Tibial artery (tissue), 4 donors: ENCODE measurements at regions of chr15 and their contacts with region 1.

Region 1: DNA sequence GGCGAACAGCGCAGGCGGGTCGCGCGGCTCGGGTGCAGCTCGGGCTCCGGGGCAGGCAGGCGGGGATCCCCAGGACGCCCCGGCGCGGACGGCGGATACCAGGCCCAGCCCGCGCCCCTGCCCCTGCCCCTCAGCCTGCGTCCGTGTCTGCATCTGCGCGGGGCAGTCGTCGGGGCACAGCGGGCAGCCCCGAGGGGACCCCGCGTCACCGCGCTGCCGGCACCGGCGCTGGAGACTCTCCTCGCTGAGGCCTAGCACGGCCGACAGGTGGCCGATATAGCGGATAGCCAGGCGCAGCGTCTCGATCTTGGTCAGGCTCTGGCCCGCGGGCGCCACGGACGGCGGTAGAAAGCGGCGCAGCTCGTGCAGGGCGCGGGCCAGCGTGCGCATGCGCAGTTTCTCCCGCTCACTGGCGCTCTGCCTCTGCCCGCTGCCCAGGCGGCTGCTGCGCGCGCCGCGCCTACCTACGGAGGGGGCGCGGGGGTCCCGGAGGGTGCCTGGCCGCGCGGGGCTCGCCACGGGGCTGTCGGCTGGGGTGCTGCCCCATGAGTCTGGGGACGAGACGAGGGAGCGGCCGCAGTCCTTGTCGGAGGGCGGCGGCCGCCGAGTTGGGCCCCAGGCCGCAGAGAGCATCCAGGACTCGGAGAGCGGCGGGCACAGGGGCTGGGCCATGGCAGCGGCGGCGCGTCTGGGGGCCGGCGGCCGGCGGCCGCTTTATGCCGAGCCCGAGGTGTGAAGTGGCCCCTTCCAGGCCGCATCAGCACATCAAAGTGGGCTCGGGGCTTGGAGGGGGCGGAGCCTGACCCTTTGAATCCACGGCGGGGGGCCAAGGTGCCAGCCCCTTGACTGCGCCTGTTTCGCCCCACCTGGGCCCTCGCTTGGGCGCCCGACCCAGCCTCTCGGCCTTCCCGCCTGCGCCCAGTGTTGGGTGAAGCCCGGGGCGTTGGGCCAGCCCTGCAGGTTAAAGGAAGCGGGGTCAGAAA is at the start of gene MESP1:
- DNase-seq: peak; percentile 85 to 93
- H3K4me3 ChIP-seq: peak within 1 kb of the TSS; percentile 66 to 87
- H3K27ac ChIP-seq: peak within 1 kb of the TSS; percentile 64 to 69
- H3K4me1 ChIP-seq: peaks cover 0 to 23% (median 14%) of the 10 kb centered on the region in 4 donors
- H3K27me3 ChIP-seq: peaks cover 0 to 30% of the 10 kb centered on the region in 2 donors
- CTCF ChIP-seq: peak; percentile 88 to 93

Region 2: GRCh38 chr15:89647191-89647851 is 103.5 kb before region 1 on chr15:
- intact Hi-C with region 1: loop called (anchors 5 kb)
- DNase-seq: peak; percentile 86
- H3K4me3 ChIP-seq: no peak overlapping the region
- H3K27ac ChIP-seq: no peak overlapping the region
- H3K4me1 ChIP-seq: peaks cover 0 to 6% (median 0%) of the 10 kb centered on the region in 4 donors
- H3K27me3 ChIP-seq: no peaks in the 10 kb centered on the region
- CTCF ChIP-seq: peak; percentile 88 to 93

Region 3: DNA sequence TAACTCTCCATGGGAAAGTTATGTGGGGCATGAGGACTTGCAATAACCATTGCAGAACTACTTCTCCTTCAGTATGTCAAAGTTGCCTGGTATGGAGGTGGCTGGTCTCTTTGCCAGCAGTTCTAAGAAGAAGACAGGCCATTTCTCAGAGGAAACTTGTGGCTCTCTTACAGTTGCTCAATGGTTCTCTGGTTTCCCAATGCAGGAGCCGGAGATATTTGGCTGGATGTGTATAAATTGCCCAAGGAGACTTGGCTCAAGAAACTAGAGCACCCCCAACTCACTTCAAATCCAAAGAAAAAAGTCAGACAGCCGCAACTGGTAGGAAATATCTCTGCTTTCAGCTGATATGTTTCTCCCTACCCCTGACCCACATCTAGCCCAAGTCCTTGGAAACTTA is 36.1 kb before region 1 on chr15:
- intact Hi-C with region 1: no loop called
- DNase-seq: no peak
- H3K4me3 ChIP-seq: no peak overlapping the region
- H3K27ac ChIP-seq: no peak overlapping the region
- H3K4me1 ChIP-seq: no peaks in the 10 kb centered on the region
- H3K27me3 ChIP-seq: no peaks in the 10 kb centered on the region
- CTCF ChIP-seq: no peak

Region 4: GRCh38 chr15:89812011-89812835 is 61.4 kb after region 1 on chr15:
- intact Hi-C with region 1: no loop called
- DNase-seq: peak; percentile 80 to 87
- H3K4me3 ChIP-seq: no peak overlapping the region
- H3K27ac ChIP-seq: peak overlapping the region; percentile 38 to 55
- H3K4me1 ChIP-seq: peaks cover 0 to 30% (median 22%) of the 10 kb centered on the region in 4 donors
- H3K27me3 ChIP-seq: peaks cover 0 to 42% of the 10 kb centered on the region in 2 donors
- CTCF ChIP-seq: no peak

Region 5: GRCh38 chr15:89828241-89829082 is 77.6 kb after region 1 on chr15:
- intact Hi-C with region 1: no loop called
- DNase-seq: peak in 1 of 2 donors; percentile 59
- H3K4me3 ChIP-seq: no peak overlapping the region
- H3K27ac ChIP-seq: peak overlapping the region; percentile 48 to 64
- H3K4me1 ChIP-seq: peaks cover 0 to 26% (median 19%) of the 10 kb centered on the region in 4 donors
- H3K27me3 ChIP-seq: no peaks in the 10 kb centered on the region
- CTCF ChIP-seq: no peak

Region 6: DNA sequence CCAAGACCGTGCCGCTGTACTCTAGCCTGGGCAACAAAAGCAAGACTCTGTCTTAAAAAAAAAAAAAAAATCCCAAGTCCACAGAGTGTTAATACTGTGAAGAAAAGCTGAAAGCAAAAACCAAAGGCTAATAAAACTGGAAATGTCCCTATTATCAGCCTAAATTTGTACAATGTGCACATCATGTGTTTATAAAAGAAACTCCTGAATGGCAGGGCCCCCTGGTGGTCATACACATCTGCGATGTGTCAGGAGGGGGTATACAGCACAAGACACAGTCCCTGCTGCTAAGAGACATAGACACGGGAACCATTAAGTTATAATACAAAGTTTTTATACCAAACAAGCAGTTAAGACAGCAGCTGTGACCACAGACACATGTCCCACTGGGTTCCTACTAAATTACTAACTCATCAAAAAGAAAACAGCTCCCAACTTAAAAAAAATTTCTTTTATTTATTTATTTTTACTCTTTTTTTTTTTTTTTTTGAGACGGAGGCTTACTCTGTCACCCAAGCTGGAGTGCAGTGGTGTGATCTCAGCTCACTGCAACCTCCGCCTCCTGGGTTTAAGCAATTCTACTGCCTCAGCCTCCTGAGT is 320.5 kb after region 1 on chr15:
- intact Hi-C with region 1: loop called (anchors 10 kb)
- DNase-seq: peak; percentile 87 to 90
- H3K4me3 ChIP-seq: no peak overlapping the region
- H3K27ac ChIP-seq: peak overlapping the region in 1 of 2 donors; percentile 6
- H3K4me1 ChIP-seq: peaks cover 0 to 11% (median 2%) of the 10 kb centered on the region in 4 donors
- H3K27me3 ChIP-seq: no peaks in the 10 kb centered on the region
- CTCF ChIP-seq: peak; percentile 66 to 79